Natural killer cell (primary cell): ENCODE measurements at regions of chr13 and their contacts with region 1.

Region 1: DNA sequence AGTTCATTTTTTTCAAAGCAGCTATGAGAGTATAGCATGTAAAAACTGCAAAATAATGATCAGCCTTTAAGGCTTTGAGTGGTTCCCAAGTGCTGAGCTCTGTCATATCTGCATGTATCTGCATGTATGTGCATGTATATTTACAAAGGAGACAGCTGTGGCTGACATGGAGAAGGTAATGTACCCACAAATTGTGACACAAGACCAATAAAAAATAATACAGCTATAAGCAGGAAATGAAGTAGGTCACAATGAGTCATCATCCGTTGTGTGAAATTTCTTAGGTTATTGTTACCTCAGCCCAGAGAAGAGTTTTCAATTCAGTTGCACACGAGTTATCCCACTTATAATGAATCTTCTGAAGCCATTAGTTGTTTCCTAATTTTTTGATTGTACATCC is 60.9 kb upstream of the MED4 start:
- DNase-seq: peak in 1 of 2 donors; percentile 86
- ATAC-seq: peak; percentile 88 to 94 (median 93)
- H3K4me3 ChIP-seq: no peak overlapping the region
- H3K4me3 Mint-ChIP-seq: peak overlapping the region; percentile 86
- H3K27ac ChIP-seq: peak overlapping the region; percentile 74
- H3K27ac Mint-ChIP-seq: peak overlapping the region; percentile 95 to 97
- H3K4me1 ChIP-seq: peaks cover 39% of the 10 kb centered on the region
- H3K4me1 Mint-ChIP-seq: peaks cover 55 to 62% of the 10 kb centered on the region in 2 donors
- H3K27me3 ChIP-seq: no peaks in the 10 kb centered on the region
- H3K27me3 Mint-ChIP-seq: no peaks in the 10 kb centered on the region
- CTCF ChIP-seq: no peak

Region 2: GRCh38 chr13:48303359-48304142 is 147.7 kb after region 1 on chr13 and contains the start of gene RB1:
- intact Hi-C with region 1: loop called (anchors 10 kb)
- DNase-seq: peak; percentile 90 to 97
- ATAC-seq: peak; percentile 75 to 89 (median 86)
- H3K4me3 ChIP-seq: peak within 1 kb of the TSS; percentile 92
- H3K4me3 Mint-ChIP-seq: peak within 1 kb of the TSS; percentile 89
- H3K27ac ChIP-seq: peak within 1 kb of the TSS; percentile 97
- H3K27ac Mint-ChIP-seq: peak within 1 kb of the TSS; percentile 97 to 98
- H3K4me1 ChIP-seq: peaks cover 12% of the 10 kb centered on the region
- H3K4me1 Mint-ChIP-seq: peaks cover 26 to 33% of the 10 kb centered on the region in 2 donors
- H3K27me3 ChIP-seq: no peaks in the 10 kb centered on the region
- H3K27me3 Mint-ChIP-seq: no peaks in the 10 kb centered on the region
- CTCF ChIP-seq: no peak
- total RNA-seq, gene RB1: 25.5 to 28.3 (median 26.9) TPM

Region 3: DNA sequence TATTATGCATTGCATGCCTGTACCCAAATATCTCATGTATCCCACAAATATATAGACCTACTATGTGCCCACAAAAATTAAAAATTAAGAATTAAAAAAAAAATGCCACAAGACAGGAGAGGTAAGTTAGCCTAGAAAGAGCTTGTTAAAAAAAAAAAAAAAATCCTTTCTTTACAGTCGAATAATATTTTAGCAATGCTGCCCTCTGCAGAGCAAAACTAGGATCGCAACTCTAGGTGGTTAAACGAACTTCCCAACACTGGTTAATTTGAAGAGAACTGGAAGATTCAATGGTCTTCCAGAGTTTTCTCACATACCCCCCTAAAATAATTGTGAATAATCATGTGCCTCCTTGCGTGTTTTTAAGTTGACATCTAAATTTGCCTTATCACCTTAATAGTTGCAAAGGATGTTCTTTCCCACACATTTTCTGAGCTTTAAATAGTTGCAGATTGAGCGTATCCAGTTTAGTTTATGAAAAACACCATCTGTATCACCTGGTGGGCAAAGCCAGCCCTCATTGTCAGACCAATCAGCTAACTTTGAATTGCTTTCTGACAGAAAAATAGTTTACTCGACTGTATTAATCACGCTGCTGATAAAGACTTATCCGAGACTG is 424.4 kb after region 1 on chr13:
- intact Hi-C with region 1: no loop called
- DNase-seq: peak; percentile 56 to 86
- ATAC-seq: peak; percentile 72 to 79 (median 78)
- H3K4me3 ChIP-seq: no peak overlapping the region
- H3K4me3 Mint-ChIP-seq: no peak overlapping the region
- H3K27ac ChIP-seq: no peak overlapping the region
- H3K27ac Mint-ChIP-seq: no peak overlapping the region
- H3K4me1 ChIP-seq: peaks cover 21% of the 10 kb centered on the region
- H3K4me1 Mint-ChIP-seq: peaks cover 6 to 27% of the 10 kb centered on the region in 2 donors
- H3K27me3 ChIP-seq: no peaks in the 10 kb centered on the region
- H3K27me3 Mint-ChIP-seq: peaks cover 6 to 12% of the 10 kb centered on the region in 2 donors
- CTCF ChIP-seq: peak; percentile 89